Activated naive CD4-positive, alpha-beta T cell treated with anti-CD3 and anti-CD28 coated beads for 36 hours (primary cell): ENCODE measurements at regions of chr3 and their contacts with region 1.

Region 1: DNA sequence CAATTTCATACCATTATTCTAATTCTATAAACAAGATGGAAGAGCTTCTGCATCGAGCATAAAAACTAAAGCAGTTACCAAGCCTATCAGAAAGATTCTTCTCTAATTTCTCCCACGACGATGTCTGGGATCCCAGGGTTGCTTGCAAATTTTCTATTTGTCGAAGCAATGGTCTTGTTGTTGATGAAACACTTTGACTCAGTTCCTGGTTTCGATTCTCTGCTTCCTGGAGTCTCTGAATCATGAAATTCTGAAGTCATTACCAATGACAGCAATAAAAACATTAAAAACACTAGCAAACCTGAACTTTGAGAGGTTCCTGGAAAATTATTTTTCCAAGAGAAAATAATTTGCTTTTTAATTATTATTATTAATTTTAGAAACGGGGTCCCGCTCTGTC is 18.7 kb downstream of the TMF1 start:
- DNase-seq: peak; percentile 28
- H3K4me3 Mint-ChIP-seq: no peak overlapping the region
- H3K27ac Mint-ChIP-seq: peak overlapping the region; percentile 30
- H3K4me1 Mint-ChIP-seq: peaks cover 8% of the 10 kb centered on the region
- H3K27me3 Mint-ChIP-seq: no peaks in the 10 kb centered on the region

Region 2: GRCh38 chr3:69013253-69014021 is 20.0 kb before region 1 on chr3 and contains the start of gene EOGT:
- CTCF ChIA-PET with region 1: no interaction called
- intact Hi-C with region 1: loop called (anchors 2 kb)
- DNase-seq: peak; percentile 88
- H3K4me3 Mint-ChIP-seq: peak within 1 kb of the TSS; percentile 78
- H3K27ac Mint-ChIP-seq: peak within 1 kb of the TSS; percentile 73
- H3K4me1 Mint-ChIP-seq: peaks cover 15% of the 10 kb centered on the region
- H3K27me3 Mint-ChIP-seq: no peaks in the 10 kb centered on the region
- total RNA-seq, gene EOGT: 4.8 TPM

Region 3: GRCh38 chr3:69115731-69116130 is 82.3 kb after region 1 on chr3:
- CTCF ChIA-PET with region 1: no interaction called
- intact Hi-C with region 1: no loop called
- DNase-seq: no peak
- H3K4me3 Mint-ChIP-seq: no peak overlapping the region
- H3K27ac Mint-ChIP-seq: no peak overlapping the region
- H3K4me1 Mint-ChIP-seq: peaks cover 18% of the 10 kb centered on the region
- H3K27me3 Mint-ChIP-seq: no peaks in the 10 kb centered on the region